ENCODE measurements at regions of chr6 and their contacts with region 1.

Region 1: DNA sequence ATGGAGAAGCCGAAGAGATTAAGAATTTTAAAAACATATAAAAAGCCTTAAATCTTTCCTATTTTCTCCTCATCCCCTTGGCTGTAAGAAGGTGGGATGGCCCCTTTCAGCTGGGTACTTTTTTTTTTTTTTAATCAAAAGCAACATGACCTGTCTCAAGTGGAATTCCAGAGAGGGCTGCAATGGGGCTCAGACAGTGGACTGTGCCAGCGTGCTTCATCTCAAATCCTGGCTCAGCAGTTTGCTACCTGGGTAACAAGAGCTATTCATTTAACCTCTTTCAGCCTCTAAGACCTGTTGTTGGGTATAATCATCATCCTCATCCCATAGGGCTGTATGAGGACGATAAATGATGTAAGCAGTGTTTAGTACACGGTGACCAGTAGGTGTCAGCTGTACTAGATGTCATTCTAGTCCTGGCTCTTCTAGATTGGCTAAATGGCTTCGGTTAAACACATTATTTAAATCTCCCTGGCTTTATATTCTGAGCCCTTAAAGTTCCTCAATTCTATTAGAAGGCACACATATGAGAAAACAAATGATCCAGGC is 6.9 kb upstream of the PPP1R3G start:
- DNase-seq: no peak
- H3K4me3 ChIP-seq: no peak overlapping the region
- H3K27ac ChIP-seq: no peak overlapping the region
- H3K4me1 ChIP-seq: peaks cover 14% of the 10 kb centered on the region
- H3K27me3 ChIP-seq: no peaks in the 10 kb centered on the region
- CTCF ChIP-seq: no peak; the same call in 1 of the 2 replicates

Region 2: GRCh38 chr6:4687989-4688947 is 389.9 kb before region 1 on chr6:
- CTCF ChIA-PET with region 1: no interaction called
- POLR2A ChIA-PET with region 1: interaction called, 10 read pairs
- intact Hi-C with region 1: no loop called
- DNase-seq: peak; percentile 48 to 69
- H3K4me3 ChIP-seq: peak overlapping the region; percentile 54
- H3K27ac ChIP-seq: peak overlapping the region; percentile 90
- H3K4me1 ChIP-seq: peaks cover 13% of the 10 kb centered on the region
- H3K27me3 ChIP-seq: no peaks in the 10 kb centered on the region
- CTCF ChIP-seq: no peak

Region 3: GRCh38 chr6:5095236-5095635 is 17.0 kb after region 1 on chr6:
- CTCF ChIA-PET with region 1: no interaction called
- POLR2A ChIA-PET with region 1: no interaction called
- intact Hi-C with region 1: no loop called
- DNase-seq: no peak
- H3K4me3 ChIP-seq: no peak overlapping the region
- H3K27ac ChIP-seq: no peak overlapping the region
- H3K4me1 ChIP-seq: peaks cover 6% of the 10 kb centered on the region
- H3K27me3 ChIP-seq: no peaks in the 10 kb centered on the region
- CTCF ChIP-seq: no peak

Region 4: GRCh38 chr6:6256886-6257285 is 1178.7 kb after region 1 on chr6:
- CTCF ChIA-PET with region 1: interaction called, 11 read pairs
- POLR2A ChIA-PET with region 1: no interaction called
- intact Hi-C with region 1: no loop called
- DNase-seq: no peak
- H3K4me3 ChIP-seq: no peak overlapping the region
- H3K27ac ChIP-seq: no peak overlapping the region
- H3K4me1 ChIP-seq: no peaks in the 10 kb centered on the region
- H3K27me3 ChIP-seq: peaks cover 7% of the 10 kb centered on the region; the same call in 1 of the 2 replicates
- CTCF ChIP-seq: no peak